ENCODE measurements at regions of chr20 and their contacts with region 1.

Region 1: DNA sequence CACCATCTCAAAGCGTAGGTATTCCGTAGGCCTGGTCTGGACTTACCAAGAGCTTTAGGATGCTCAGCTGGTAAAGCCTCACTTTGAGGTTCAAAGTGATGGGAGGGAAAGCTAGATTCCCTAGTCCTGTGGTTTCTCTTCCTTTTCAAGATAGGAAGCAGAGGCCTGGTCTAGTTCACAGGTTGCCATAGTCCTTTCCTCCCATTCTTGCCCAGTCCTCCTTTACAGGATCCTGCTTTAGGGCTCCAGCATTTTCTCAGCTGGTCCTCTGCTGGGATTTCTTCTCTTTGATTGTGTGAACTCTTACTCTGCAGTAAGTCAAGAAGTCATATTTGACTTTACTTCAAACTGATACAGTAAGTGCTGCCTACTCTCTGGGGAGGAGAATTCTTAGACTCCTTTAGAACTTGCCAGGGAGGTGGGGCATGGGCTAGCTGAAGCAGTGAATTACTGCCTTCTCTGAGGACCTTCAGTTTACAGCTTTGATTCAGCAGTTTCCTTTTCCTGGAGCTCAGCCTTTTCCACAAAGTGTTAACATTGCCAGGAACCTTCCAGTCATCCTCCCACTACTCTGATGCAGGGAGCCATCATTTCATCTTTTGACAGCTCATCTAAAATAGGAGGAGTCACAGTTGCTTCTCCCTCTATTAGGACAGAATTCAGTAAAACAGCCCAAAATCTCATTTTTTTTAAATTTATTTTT is 42.8 kb upstream of the PLCG1 start:
- DNase-seq: no peak
- H3K4me3 ChIP-seq: no peak overlapping the region
- H3K27ac ChIP-seq: no peak overlapping the region
- H3K4me1 ChIP-seq: no peaks in the 10 kb centered on the region
- H3K27me3 ChIP-seq: no peaks in the 10 kb centered on the region
- CTCF ChIP-seq: no peak
- POLR2A ChIP-seq: no peak

Region 2: GRCh38 chr20:40990542-40991120 is 103.9 kb before region 1 on chr20:
- intact Hi-C with region 1: loop called (anchors 5 kb)
- DNase-seq: no peak
- H3K4me3 ChIP-seq: no peak overlapping the region
- H3K27ac ChIP-seq: no peak overlapping the region
- H3K4me1 ChIP-seq: peaks cover 9% of the 10 kb centered on the region
- H3K27me3 ChIP-seq: no peaks in the 10 kb centered on the region
- CTCF ChIP-seq: peak; percentile 48 to 77 (median 51)
- POLR2A ChIP-seq: no peak